Activated naive CD4-positive, alpha-beta T cell treated with anti-CD3 and anti-CD28 coated beads, Interleukin-2, amount 10 ng/mL, durations not matched to agents 7 days and 5 days (primary cell): ENCODE measurements at regions of chr1 and their contacts with region 1.

Region 1: GRCh38 chr1:39408641-39409054 is 82.8 kb upstream of the BMP8A start:
- DNase-seq: peak; percentile 90
- H3K4me3 Mint-ChIP-seq: peak overlapping the region; percentile 82
- H3K27ac Mint-ChIP-seq: no peak overlapping the region
- H3K4me1 Mint-ChIP-seq: peaks cover 52% of the 10 kb centered on the region
- H3K27me3 Mint-ChIP-seq: no peaks in the 10 kb centered on the region

Region 2: GRCh38 chr1:39387452-39387851 is 21.2 kb before region 1 on chr1:
- CTCF ChIA-PET with region 1: interaction called, 11 read pairs
- DNase-seq: no peak
- H3K4me3 Mint-ChIP-seq: no peak overlapping the region
- H3K27ac Mint-ChIP-seq: no peak overlapping the region
- H3K4me1 Mint-ChIP-seq: peaks cover 13% of the 10 kb centered on the region
- H3K27me3 Mint-ChIP-seq: no peaks in the 10 kb centered on the region

Region 3: GRCh38 chr1:39398278-39399021 is 10.2 kb before region 1 on chr1:
- CTCF ChIA-PET with region 1: interaction called, 29 read pairs
- DNase-seq: no peak
- H3K4me3 Mint-ChIP-seq: no peak overlapping the region
- H3K27ac Mint-ChIP-seq: peak overlapping the region; percentile 77
- H3K4me1 Mint-ChIP-seq: peaks cover 58% of the 10 kb centered on the region
- H3K27me3 Mint-ChIP-seq: no peaks in the 10 kb centered on the region